Left cardiac atrium (tissue), 4 donors: ENCODE measurements at regions of chr17 and their contacts with region 1.

Region 1: DNA sequence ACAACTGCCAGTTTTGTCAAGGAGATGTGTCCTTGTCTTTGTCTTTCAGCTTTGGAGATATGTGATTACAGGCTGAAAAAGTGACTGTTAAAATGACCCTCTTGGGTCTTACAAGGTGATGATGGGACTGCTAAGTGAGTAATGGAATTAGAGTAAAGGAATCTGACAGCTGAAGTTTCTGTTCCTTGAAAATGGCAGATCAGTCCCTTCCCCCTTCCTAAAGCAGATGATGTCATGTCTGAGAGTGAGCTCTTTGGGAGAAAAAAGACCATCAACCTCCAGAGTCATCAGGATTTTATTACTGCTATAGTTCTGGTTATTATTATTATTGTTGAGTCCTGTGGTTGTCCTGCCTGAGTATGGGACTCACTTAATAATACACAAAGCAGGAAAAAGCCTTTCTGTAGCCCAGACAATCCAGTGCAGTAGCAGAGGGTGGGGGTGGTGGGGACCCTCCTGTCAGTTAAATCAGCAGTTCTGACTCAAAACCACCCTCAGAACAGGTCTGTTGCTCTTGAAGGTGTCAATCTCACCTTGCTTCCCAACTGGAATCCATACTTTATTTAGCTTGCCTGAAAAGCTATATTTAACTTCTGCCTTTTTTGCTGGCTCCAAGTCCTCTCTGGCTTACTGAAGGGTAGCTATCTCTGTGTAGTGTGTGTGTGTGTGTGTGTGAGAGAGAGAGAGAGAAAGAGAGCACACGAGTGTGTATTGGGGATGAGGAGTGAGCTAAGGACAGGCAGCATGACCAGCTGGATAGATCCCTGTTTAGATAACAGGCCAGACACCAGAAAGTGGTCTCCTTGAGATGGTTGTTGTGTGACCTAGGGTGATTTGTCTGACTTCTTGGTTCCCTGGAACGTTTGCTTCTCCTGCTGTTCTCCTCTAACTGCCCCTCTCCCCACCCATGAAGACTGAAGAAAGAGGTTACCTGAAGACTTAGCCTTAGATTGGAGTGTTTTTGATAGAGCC is 4.9 kb downstream of the HROB start:
- DNase-seq: no peak
- ATAC-seq: peak; percentile 39 to 70

Region 2: DNA sequence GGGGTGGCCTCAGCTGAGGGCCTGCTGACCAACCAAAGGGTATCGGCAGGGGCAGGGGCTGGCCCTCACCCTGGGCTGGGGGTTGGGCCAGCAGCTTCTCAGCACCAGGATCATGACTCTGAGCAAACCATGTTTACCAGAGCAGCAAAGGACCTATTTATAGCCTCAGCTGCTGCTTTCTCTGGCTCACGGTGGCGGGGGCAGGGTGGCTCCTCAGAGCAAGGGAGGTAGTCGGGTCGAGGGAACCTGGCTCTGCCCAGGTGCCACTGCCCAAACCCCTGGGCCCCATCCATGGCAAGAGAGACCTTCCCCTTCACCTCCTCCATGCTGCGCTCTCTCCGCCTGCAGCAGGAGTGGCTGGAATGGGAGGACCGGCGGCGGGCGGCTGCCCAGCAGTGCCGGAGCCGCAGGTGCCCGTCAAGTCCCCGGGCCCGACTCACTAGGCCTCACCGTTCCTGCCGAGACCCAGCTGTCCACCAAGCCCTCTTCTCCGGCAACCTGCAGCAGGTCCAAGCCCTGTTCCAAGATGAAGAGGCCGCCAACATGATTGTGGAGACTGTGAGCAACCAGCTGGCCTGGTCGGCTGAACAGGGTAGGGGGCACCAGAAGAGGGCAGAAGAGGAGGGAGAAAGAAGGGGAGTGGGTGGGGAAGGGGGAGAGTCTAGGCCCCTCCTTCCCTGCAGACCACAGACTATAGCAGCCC is 24.0 kb after region 1 on chr17 and contains the start of gene ASB16:
- intact Hi-C with region 1: loop called in 1 of 2 experiments (anchors 2 kb)
- DNase-seq: peak; percentile 46
- ATAC-seq: peak; percentile 69 to 73
- total RNA-seq, gene ASB16: 4.9 to 8.7 TPM